ENCODE measurements at regions of chr1 and their contacts with region 1.

Region 1: DNA sequence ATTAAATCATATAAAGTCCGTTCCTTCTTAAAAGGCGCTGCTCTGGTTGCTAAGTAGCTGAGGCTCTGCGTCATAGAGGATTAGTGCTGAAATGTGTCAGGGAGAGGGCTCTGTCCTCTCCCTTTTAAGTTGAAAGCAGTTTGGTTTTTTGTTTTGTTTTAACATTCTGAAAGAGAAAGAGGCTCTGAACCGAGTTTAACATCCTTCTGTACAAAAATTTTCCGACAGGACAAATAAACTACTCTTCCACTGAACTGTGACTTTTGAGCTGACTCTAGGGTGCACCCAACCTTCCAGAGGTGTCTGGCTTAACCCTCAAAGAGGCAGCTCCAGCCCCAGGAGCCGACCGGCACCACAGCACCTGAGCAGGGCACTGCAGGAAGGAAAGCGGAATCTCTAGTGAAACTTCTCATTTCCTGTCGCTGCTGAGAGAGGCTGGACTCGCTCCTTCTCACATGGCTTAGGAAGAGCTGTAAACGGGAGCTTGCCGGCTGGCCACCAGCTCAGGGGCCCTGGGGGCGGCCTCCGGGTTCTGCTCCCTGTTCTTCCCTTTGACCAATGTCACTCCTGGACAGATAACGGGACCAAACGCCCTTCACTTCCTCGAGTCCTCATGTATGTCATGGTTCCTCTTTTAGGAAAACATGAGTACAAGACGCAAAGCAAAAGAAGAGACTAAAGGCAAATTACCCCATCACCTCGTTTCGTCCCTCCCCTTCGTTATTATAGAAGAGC is 1.2 kb downstream of the VAV3 start:
- DNase-seq: peak; percentile 56
- ATAC-seq: peak; percentile 56
- H3K4me3 Mint-ChIP-seq: peak overlapping the region; percentile 83
- H3K27ac Mint-ChIP-seq: peak overlapping the region; percentile 80
- H3K4me1 Mint-ChIP-seq: peaks cover 23% of the 10 kb centered on the region
- H3K27me3 Mint-ChIP-seq: peaks cover 10% of the 10 kb centered on the region

Region 2: GRCh38 chr1:107593421-107594209 is 370.2 kb before region 1 on chr1:
- CTCF ChIA-PET with region 1: no interaction called
- DNase-seq: no peak
- ATAC-seq: peak; percentile 42
- H3K4me3 Mint-ChIP-seq: no peak overlapping the region
- H3K27ac Mint-ChIP-seq: no peak overlapping the region
- H3K4me1 Mint-ChIP-seq: peaks cover 9% of the 10 kb centered on the region
- H3K27me3 Mint-ChIP-seq: no peaks in the 10 kb centered on the region

Region 3: DNA sequence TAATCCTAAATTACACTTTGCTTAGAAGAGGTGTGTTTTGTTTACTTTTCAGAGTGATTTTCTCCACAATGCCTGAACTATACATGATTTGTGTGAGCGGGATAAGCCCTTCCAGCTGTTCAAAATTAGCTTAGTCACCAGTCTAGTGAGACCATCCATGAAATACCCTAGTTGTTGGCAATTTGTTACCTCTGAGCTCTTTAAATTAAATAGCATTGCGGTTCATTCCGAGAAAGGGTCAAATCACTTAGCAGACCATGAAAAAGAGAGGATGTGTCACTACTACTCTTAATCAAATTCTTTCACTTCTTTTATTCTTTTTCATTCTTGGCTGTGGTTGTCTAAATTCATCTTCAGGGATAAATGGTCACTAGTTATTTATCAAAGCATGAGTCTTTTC is 13.1 kb after region 1 on chr1:
- CTCF ChIA-PET with region 1: interaction called, 12 read pairs
- DNase-seq: no peak
- ATAC-seq: no peak
- H3K4me3 Mint-ChIP-seq: no peak overlapping the region
- H3K27ac Mint-ChIP-seq: no peak overlapping the region
- H3K4me1 Mint-ChIP-seq: peaks cover 12% of the 10 kb centered on the region
- H3K27me3 Mint-ChIP-seq: peaks cover 15% of the 10 kb centered on the region

Region 4: DNA sequence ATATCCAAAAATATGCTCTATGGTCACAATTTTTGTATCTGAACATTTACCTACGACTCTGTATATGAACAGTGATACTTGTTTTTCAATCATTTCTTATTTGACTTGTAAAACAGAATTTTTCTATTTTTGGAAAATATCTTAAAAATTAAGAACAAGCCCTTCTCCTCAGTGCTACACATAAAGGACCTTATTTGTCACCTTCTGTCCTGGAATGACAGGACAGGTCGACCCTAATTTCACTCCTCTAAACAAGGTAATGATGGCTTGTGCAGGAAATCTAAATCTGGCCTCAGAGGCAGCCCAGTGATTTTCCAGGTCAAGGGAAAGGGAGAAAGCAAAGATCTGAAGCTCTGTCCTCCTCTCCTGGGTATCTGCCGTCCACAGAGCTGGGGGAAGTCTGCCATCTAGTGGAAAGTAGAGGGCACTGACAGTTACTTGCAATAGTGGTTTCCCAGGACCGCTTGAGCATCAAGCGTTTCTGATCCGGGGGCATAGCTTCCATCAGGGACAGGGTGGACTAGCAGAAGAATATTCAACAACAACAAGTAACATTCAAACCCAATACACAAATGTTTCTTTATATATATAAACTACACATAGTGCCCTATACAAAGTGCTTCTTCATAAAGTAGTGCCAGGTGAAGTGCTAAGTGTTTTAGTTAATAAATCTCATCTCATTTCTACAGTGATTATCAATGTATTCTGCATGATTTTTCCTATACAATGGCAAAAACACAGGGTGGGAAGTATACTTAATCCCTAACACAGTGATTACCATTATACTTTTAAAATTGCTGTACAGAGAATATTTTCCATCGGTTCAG is 161.8 kb after region 1 on chr1:
- CTCF ChIA-PET with region 1: interaction called, 11 read pairs
- DNase-seq: peak; percentile 76
- ATAC-seq: peak; percentile 88
- H3K4me3 Mint-ChIP-seq: no peak overlapping the region
- H3K27ac Mint-ChIP-seq: no peak overlapping the region
- H3K4me1 Mint-ChIP-seq: no peaks in the 10 kb centered on the region
- H3K27me3 Mint-ChIP-seq: no peaks in the 10 kb centered on the region

Measured in activated CD8-positive, alpha-beta memory T cell treated with anti-CD3 and anti-CD28 coated beads, Interleukin-2, amount 10 ng/mL, durations not matched to agents 7 days and 5 days (primary cell).